Calu3 (cell line): ENCODE measurements at regions of chr7 and their contacts with region 1.

Region 1: DNA sequence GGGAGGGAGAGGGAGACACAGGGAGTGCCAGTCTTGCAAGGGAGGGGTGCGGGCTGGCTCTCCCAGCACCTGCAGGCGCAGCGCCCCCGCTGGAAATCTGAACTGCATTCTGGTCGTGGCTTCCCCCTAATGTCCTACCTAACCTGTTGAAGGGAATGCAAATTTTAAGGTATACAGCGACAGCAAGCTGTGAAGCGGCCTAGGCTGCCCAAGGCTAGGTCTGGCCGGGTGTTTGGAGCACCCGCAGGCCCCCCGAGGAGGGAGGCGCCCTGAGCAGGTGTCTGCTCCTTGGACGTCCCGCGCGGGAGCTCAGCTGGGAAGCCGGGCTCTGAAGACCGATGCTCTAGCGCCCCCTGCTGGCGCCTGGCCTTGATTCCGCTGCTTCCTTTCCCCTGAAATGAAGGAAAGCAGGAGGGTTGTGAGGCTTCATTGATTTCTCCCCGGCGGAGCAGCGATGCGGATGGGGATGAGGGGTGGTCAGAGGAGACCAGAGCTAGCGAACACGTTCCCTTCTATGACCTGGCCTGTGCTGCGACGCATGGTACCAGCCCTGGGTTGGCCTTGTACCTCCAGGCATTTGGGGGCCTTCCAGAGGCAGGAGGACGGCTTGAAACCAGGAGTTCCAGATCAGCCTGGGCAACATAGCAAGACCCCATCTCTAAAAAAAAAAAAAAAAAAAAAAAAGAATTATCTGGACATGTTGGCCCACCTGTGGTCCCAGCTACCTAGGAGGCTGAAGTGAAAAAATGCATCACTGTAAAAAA is 601.3 kb downstream of the GALNT17 start:
- DNase-seq: peak; percentile 63
- H3K4me3 Mint-ChIP-seq: no peak overlapping the region
- H3K27ac Mint-ChIP-seq: no peak overlapping the region
- H3K4me1 Mint-ChIP-seq: no peaks in the 10 kb centered on the region
- H3K27me3 Mint-ChIP-seq: no peaks in the 10 kb centered on the region
- CTCF ChIP-seq: peak; percentile 37

Region 2: DNA sequence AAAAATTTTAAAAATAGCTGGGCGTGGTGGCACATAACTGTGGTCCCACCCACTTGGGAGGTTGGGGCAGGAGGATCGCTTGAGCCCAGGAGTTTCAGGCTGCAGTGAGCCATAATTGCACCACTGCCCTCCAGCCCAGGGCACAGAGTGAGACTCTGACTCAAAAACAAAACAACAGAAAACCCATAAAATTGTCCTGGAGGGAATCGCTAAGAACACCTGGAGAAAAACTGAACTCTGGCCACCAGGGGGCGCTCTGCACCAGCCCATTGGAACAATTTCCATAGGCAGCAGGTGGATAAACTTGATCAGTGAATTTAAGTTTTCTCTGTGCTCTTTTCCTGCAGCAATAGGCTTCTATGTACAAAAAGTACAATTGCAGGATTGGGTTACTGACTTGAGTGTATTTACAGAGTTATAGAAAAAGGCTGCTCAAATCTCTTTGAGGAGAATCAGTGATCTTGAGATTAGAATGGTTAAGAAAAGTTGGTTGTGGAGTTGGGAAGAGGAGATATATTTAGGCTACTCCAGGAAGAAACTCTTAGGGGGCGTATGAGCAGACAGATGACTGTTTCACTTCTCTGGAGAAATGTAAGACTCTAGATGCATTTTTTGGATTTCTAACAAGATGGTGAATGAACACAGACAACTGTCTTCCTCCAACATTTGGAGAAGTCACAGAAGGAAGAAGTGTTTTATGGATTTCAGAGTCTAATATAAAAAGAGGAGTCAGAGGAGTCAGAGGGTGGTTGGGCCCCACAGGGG is 876.2 kb before region 1 on chr7:
- CTCF ChIA-PET with region 1: interaction called, 3 read pairs
- intact Hi-C with region 1: loop called (anchors 2 kb)
- DNase-seq: peak; percentile 49
- H3K4me3 Mint-ChIP-seq: no peak overlapping the region
- H3K27ac Mint-ChIP-seq: no peak overlapping the region
- H3K4me1 Mint-ChIP-seq: no peaks in the 10 kb centered on the region
- H3K27me3 Mint-ChIP-seq: no peaks in the 10 kb centered on the region
- CTCF ChIP-seq: peak; percentile 36

Region 3: DNA sequence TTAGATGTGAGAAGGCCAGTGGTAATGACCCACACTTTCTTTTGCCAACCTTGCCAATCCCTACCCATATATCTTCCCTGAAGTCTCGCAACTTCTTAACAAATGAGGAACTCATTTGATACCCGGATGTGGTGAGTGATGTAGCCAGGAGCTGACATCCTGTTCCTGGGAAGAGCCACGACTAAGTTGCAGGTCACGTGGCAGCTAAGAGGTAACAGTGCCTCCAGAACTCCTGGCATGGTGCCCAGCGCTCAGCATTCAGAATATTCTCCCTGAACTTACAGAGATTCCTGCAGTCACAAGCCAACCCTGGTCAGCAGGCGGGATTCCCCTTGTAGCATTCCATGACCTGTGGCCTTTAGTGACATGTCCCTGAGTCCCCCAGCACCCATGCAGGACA is 318.8 kb before region 1 on chr7:
- CTCF ChIA-PET with region 1: no interaction called
- intact Hi-C with region 1: no loop called
- DNase-seq: no peak
- H3K4me3 Mint-ChIP-seq: no peak overlapping the region
- H3K27ac Mint-ChIP-seq: no peak overlapping the region
- H3K4me1 Mint-ChIP-seq: no peaks in the 10 kb centered on the region
- H3K27me3 Mint-ChIP-seq: no peaks in the 10 kb centered on the region
- CTCF ChIP-seq: no peak